Naive thymus-derived CD4-positive, alpha-beta T cell (primary cell): ENCODE measurements at regions of chr11 and their contacts with region 1.

Region 1: GRCh38 chr11:47426061-47426956 is at the start of gene PSMC3:
- DNase-seq: peak; percentile 92 to 99 (median 95)
- ATAC-seq: peak; percentile 98
- H3K4me3 ChIP-seq: peak within 1 kb of the TSS; percentile 95
- H3K4me3 Mint-ChIP-seq: peak within 1 kb of the TSS; percentile 91 to 99 (median 98)
- H3K27ac ChIP-seq: peak within 1 kb of the TSS; percentile 96
- H3K27ac Mint-ChIP-seq: peak within 1 kb of the TSS; percentile 93 to 99 (median 97)
- H3K4me1 ChIP-seq: peaks cover 9 to 10% of the 10 kb centered on the region in 2 donors
- H3K4me1 Mint-ChIP-seq: peaks cover 16 to 32% (median 27%) of the 10 kb centered on the region in 7 donors
- H3K27me3 ChIP-seq: no peaks in the 10 kb centered on the region
- H3K27me3 Mint-ChIP-seq: no peaks in the 10 kb centered on the region
- total RNA-seq, gene PSMC3: 42.2 to 149 (median 51.3) TPM

Region 2: DNA sequence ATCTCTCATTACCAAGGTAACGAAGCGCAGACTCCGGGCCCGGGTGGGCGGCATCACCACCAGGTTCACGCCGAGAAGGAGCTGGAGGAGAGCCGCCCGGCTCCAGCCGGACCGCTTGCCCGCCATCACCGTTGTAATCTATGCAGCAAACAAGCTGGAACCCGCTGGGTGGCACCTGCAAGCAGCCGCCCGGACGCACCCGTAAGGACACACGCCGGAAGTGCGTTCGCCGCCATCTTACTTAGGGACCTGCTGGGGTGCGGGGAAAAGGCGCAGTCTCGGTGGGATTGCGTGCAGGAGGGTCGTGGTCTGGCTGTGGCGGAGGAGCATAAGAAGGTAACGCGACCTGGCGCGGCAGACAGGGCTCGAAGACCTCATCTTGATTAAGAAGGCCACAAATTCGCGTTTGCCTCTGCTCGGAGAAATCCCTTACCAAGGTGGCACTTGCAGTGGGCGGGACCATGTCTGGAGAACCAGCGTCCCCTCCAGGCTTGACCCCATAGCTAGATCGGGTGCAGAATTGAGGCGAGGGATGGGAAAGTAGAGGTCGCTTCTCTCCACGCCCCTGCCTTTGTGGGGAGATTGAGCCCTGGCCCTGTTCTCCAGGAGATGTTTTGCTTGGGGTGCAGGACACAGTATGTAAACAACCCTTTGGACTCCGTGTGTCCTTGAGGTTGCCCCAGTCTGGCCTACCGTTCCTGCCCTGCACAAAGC is 177.5 kb before region 1 on chr11 and contains the start of gene ACP2:
- CTCF ChIA-PET with region 1: no interaction called
- POLR2A ChIA-PET with region 1: interaction called, 3 read pairs
- intact Hi-C with region 1: loop called in 1 of 2 experiments (anchors 1 kb)
- DNase-seq: peak; percentile 83 to 91 (median 86)
- ATAC-seq: peak; percentile 99
- H3K4me3 ChIP-seq: peak within 1 kb of the TSS; percentile 93
- H3K4me3 Mint-ChIP-seq: peak within 1 kb of the TSS; percentile 93 to 100 (median 98)
- H3K27ac ChIP-seq: peak within 1 kb of the TSS; percentile 87
- H3K27ac Mint-ChIP-seq: peak within 1 kb of the TSS; percentile 94 to 100 (median 98)
- H3K4me1 ChIP-seq: peaks cover 11 to 15% of the 10 kb centered on the region in 2 donors
- H3K4me1 Mint-ChIP-seq: peaks cover 13 to 39% (median 29%) of the 10 kb centered on the region in 7 donors
- H3K27me3 ChIP-seq: no peaks in the 10 kb centered on the region
- H3K27me3 Mint-ChIP-seq: no peaks in the 10 kb centered on the region
- total RNA-seq, gene ACP2: 17.6 to 38.1 (median 24.3) TPM

Region 3: DNA sequence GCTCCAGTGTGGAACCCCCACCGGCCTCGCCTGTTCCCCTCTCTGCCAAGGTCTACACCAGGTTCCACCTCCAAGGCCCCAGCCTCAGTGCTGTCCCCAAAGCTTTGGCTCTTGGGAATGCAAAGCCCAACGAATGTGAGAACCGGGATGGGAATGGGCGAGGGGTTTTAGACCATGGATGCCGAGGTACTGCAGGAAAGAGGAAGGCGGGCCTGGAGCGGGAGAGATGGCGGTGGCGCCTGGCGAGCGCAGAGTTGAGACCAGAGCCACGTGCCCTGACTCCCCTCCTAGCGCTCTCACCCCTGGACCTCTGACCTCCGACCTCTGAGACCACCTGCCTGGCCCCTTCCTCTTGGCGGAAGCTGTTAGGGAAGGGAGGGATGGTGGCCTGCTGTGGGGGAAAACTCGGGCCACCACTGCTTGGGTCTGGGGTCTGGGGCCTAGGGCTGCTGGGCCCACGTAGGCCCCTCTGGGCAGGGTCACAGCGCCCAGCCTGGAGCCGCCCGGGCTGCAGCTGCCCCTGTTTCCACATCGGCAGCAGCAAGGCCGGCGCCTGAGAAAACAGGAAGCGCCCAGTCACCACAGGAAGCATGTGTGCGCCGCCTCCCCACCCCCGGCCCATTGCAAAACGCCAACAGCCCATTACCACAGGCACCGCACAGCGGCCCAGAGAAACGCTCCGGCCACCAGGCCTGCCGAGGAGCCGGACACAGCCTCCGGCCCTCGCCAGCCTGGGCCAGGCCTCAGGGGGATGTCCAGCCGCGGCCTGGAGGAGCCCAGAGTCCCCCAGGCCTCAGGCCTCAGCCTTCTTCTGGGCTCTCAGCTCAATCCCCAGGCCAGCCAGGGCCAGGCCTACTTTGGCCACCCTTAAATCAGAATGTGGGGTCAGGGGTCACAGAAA is 31.7 kb before region 1 on chr11:
- CTCF ChIA-PET with region 1: no interaction called
- POLR2A ChIA-PET with region 1: interaction called, 7 read pairs
- intact Hi-C with region 1: loop called in 1 of 2 experiments (anchors 1 kb)
- DNase-seq: peak in 6 of 9 donors; percentile 32 to 61 (median 46)
- ATAC-seq: peak; percentile 67
- H3K4me3 ChIP-seq: peak overlapping the region; percentile 70
- H3K4me3 Mint-ChIP-seq: peak overlapping the region; percentile 52 to 77 (median 72)
- H3K27ac ChIP-seq: peak overlapping the region; percentile 81
- H3K27ac Mint-ChIP-seq: peak overlapping the region; percentile 85 to 96 (median 92)
- H3K4me1 ChIP-seq: peaks cover 26 to 41% of the 10 kb centered on the region in 2 donors
- H3K4me1 Mint-ChIP-seq: peaks cover 16 to 65% (median 54%) of the 10 kb centered on the region in 7 donors
- H3K27me3 ChIP-seq: no peaks in the 10 kb centered on the region
- H3K27me3 Mint-ChIP-seq: no peaks in the 10 kb centered on the region

Region 4: DNA sequence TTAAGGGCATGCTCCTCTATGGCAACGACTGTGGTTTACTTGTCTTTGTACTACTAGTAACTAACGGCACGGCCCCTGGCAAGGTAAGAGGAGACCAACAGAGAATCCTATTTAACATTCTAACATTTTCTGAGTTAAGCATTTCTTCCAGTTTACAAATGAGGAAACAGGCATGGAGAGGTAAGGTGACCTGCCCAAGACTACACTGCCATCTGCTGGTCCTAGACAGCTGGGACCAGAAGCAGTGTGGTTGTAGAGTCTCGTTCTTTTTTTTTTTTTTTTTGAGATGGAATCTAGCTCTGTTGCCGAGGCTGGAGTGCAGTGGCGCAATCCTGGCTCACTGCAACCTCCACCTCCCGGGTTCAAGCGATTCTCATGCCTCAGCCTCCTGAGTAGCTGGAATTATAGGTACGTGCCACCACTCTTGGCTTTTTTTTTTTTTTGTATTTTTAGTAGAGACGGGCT is 27.9 kb after region 1 on chr11:
- CTCF ChIA-PET with region 1: no interaction called
- POLR2A ChIA-PET with region 1: interaction called, 3 read pairs
- intact Hi-C with region 1: loop called in 1 of 2 experiments (anchors 2 kb)
- DNase-seq: peak in 8 of 9 donors; percentile 51 to 76 (median 68)
- ATAC-seq: peak; percentile 99
- H3K4me3 ChIP-seq: no peak overlapping the region
- H3K4me3 Mint-ChIP-seq: peak overlapping the region in 1 of 10 donors; percentile 41
- H3K27ac ChIP-seq: no peak overlapping the region
- H3K27ac Mint-ChIP-seq: peak overlapping the region in 6 of 9 donors; percentile 16 to 49 (median 44)
- H3K4me1 ChIP-seq: no peaks in the 10 kb centered on the region
- H3K4me1 Mint-ChIP-seq: peaks cover 0 to 7% (median 4%) of the 10 kb centered on the region in 7 donors
- H3K27me3 ChIP-seq: no peaks in the 10 kb centered on the region
- H3K27me3 Mint-ChIP-seq: no peaks in the 10 kb centered on the region

Region 5: GRCh38 chr11:47642099-47642855 is 216.0 kb after region 1 on chr11 and contains the start of gene MTCH2:
- CTCF ChIA-PET with region 1: no interaction called
- POLR2A ChIA-PET with region 1: no interaction called
- intact Hi-C with region 1: loop called (anchors 1 to 5 kb)
- DNase-seq: peak; percentile 92 to 97 (median 95)
- ATAC-seq: peak; percentile 97
- H3K4me3 ChIP-seq: peak within 1 kb of the TSS; percentile 85
- H3K4me3 Mint-ChIP-seq: peak within 1 kb of the TSS; percentile 92 to 99 (median 96)
- H3K27ac ChIP-seq: peak within 1 kb of the TSS; percentile 83
- H3K27ac Mint-ChIP-seq: peak within 1 kb of the TSS; percentile 94 to 99 (median 97)
- H3K4me1 ChIP-seq: peaks cover 8 to 11% of the 10 kb centered on the region in 2 donors
- H3K4me1 Mint-ChIP-seq: peaks cover 17 to 32% (median 25%) of the 10 kb centered on the region in 7 donors
- H3K27me3 ChIP-seq: no peaks in the 10 kb centered on the region
- H3K27me3 Mint-ChIP-seq: no peaks in the 10 kb centered on the region
- total RNA-seq, gene MTCH2: 19.8 to 88.6 (median 21.1) TPM